ENCODE measurements at regions of chr5 and their contacts with region 1.

Region 1: GRCh38 chr5:71601222-71602041 is 14.3 kb downstream of the MCCC2 start:
- DNase-seq: peak; percentile 79 to 97
- H3K4me3 ChIP-seq: peak overlapping the region; percentile 34; the same call in 1 of the 2 replicates
- H3K27ac ChIP-seq: peak overlapping the region; percentile 79
- H3K4me1 ChIP-seq: peaks cover 37% of the 10 kb centered on the region
- H3K27me3 ChIP-seq: no peaks in the 10 kb centered on the region
- CTCF ChIP-seq: peak; percentile 81

Region 2: DNA sequence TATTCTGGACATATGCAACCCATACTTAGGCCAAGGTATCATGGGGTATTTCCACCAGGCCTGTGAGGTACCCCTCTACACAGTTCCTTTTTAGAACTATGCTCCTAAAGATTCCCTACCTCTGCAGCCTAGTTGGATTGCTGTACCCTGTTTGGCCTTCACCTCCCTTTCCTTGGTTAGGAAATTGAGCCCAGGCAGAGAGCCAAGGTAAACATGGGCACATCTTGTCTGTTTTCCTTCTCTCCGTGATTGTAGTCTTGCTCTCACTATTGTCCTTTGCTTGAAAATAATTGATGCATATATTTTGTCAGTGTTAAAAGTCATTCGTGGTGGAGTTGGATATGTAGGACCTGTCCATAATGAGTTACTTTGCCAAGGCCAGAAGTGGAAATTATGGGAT is 119.3 kb before region 1 on chr5:
- CTCF ChIA-PET with region 1: interaction called, 3 read pairs
- POLR2A ChIA-PET with region 1: no interaction called
- intact Hi-C with region 1: loop called (anchors 2 kb)
- DNase-seq: peak; percentile 35 to 43
- H3K4me3 ChIP-seq: no peak overlapping the region
- H3K27ac ChIP-seq: peak overlapping the region; percentile 79
- H3K4me1 ChIP-seq: peaks cover 33% of the 10 kb centered on the region
- H3K27me3 ChIP-seq: no peaks in the 10 kb centered on the region
- CTCF ChIP-seq: no peak

Region 3: DNA sequence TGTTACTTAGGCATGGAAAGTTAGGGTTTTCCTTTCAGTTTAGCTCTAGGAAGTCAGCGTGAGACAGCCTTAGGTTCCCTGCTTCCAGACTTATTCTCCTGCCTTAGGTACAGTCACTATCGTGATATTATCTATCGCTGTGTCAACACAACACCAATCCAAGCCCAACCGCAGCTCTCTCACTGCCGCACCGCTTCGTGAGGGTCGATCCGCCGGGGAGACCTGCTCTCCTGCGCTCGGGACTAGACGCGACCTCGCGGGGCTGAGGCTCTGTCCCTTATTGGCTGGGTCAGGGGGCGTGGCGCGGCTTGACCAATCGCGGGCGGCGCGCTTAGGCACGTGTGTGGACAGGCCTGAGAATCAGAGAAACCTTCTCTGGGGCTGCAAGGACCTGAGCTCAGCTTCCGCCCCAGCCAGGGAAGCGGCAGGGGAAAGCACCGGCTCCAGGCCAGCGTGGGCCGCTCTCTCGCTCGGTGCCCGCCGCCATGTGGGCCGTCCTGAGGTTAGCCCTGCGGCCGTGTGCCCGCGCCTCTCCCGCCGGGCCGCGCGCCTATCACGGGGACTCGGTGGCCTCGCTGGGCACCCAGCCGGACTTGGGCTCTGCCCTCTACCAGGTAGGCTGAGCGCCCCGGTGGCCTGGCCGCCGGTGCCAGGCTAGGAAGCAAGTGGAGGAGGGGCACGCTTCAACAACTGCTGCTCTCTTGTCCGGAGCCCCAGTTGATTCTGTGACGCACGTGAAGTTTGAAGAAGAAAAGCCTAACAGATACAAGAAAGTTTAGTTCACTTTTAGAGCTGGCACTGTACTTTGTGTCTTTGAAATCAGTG is 14.3 kb before region 1 on chr5 and contains the start of gene MCCC2:
- CTCF ChIA-PET with region 1: interaction called, 14 read pairs
- POLR2A ChIA-PET with region 1: no interaction called
- intact Hi-C with region 1: loop called (anchors 2 kb)
- DNase-seq: peak; percentile 96 to 97
- H3K4me3 ChIP-seq: peak within 1 kb of the TSS; percentile 73
- H3K27ac ChIP-seq: peak within 1 kb of the TSS; percentile 70
- H3K4me1 ChIP-seq: peaks cover 23% of the 10 kb centered on the region
- H3K27me3 ChIP-seq: no peaks in the 10 kb centered on the region
- CTCF ChIP-seq: no peak
- total RNA-seq, gene MCCC2: 77.3 and 87.0 TPM in 2 replicates

Region 4: GRCh38 chr5:72611118-72611730 is 1009.8 kb after region 1 on chr5:
- CTCF ChIA-PET with region 1: no interaction called
- POLR2A ChIA-PET with region 1: no interaction called
- intact Hi-C with region 1: no loop called
- DNase-seq: peak in 1 of 2 experiments; percentile 56
- H3K4me3 ChIP-seq: no peak overlapping the region
- H3K27ac ChIP-seq: no peak overlapping the region
- H3K4me1 ChIP-seq: no peaks in the 10 kb centered on the region
- H3K27me3 ChIP-seq: no peaks in the 10 kb centered on the region
- CTCF ChIP-seq: peak; percentile 90